ENCODE measurements at regions of chr7 and their contacts with region 1.

Region 1: DNA sequence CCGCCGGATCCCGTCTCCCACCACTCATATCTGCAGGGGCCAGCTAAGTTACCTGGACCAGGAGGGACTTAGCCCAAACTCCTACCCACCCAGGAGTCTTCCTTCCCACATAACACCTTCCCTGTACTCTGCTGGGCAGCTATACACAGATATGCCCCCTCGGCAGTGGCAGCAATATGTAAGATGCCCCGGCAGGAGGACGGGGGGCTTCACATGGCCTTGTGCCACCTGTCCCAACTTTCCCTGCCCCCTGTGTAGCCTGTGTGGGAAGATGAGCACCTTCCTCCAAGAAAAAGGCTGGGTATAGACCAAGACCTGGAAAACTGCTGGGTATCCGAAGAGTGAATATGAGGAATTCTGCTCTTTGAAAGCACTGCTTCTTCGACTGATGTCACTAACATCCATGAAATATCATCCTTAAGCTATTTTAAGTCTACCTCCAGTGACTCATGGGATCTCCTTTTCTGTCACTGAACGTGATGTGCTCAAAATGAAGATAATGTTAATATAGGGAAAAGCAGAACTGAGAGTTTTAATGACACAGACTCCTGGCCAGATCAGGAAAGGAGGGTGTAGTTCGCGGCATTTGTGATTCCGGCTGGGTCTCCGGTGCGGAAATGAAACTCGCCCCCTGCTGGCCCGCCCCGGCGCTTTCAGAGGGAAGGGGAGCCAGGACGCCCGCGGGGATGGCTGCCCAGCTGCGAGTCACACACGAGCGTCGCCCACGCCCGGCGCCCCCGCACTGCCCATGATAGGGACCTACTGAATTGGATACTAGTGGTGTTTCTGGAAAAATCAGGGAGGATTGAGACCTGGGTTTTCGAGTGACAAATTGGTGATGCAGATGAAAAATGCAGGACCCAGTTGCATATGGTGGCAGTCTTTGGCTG is 256.9 kb upstream of the NFE2L3 start:
- DNase-seq: peak; percentile 9 to 76 (median 53)
- ATAC-seq: peak; percentile 60 to 73 (median 61)
- H3K4me3 ChIP-seq: peak overlapping the region; percentile 4 to 39
- H3K4me3 Mint-ChIP-seq: peak overlapping the region; percentile 17 to 93 (median 46)
- H3K27ac ChIP-seq: no peak overlapping the region
- H3K27ac Mint-ChIP-seq: peak overlapping the region in 1 of 2 donors; percentile 23
- H3K4me1 ChIP-seq: peaks cover 0 to 22% of the 10 kb centered on the region in 2 experiments
- H3K4me1 Mint-ChIP-seq: peaks cover 23 to 27% (median 24%) of the 10 kb centered on the region in 3 donors
- H3K27me3 ChIP-seq: peaks cover 0 to 15% of the 10 kb centered on the region in 2 experiments
- H3K27me3 Mint-ChIP-seq: peaks cover 4% of the 10 kb centered on the region in 2 donors

Region 2: DNA sequence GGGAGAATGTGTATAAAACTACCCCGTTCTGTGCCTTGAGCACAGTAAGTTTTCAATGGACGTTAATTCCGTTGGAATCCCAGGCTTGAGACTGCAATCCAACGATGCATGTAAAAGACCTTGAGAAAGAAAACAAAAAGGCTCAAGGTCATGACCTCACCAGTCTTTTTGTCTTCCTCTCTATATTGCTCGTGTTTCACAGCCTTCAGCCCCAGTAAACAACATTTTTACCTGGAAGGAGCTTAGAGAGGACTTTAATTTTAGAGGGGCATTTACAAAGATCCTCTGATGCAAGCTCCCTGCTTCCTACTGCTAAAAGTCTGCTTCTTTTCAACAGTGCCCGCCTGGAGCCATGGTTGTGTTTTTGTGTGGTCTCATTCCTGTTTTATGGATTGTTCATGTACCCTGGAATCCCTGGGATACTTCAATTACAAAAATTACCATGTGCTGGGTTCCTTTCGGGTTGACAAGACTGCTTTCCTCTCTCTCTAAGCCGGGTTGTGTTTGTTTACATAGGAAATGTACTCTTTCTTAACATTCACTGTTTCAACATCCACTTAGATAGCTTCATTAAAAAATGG is 63.2 kb before region 1 on chr7:
- CTCF ChIA-PET with region 1: no interaction called
- POLR2A ChIA-PET with region 1: no interaction called
- DNase-seq: no peak
- ATAC-seq: no peak
- H3K4me3 ChIP-seq: no peak overlapping the region
- H3K4me3 Mint-ChIP-seq: no peak overlapping the region
- H3K27ac ChIP-seq: no peak overlapping the region
- H3K27ac Mint-ChIP-seq: no peak overlapping the region
- H3K4me1 ChIP-seq: no peaks in the 10 kb centered on the region
- H3K4me1 Mint-ChIP-seq: no peaks in the 10 kb centered on the region
- H3K27me3 ChIP-seq: no peaks in the 10 kb centered on the region
- H3K27me3 Mint-ChIP-seq: peaks cover 11 to 24% of the 10 kb centered on the region in 2 donors

Region 3: DNA sequence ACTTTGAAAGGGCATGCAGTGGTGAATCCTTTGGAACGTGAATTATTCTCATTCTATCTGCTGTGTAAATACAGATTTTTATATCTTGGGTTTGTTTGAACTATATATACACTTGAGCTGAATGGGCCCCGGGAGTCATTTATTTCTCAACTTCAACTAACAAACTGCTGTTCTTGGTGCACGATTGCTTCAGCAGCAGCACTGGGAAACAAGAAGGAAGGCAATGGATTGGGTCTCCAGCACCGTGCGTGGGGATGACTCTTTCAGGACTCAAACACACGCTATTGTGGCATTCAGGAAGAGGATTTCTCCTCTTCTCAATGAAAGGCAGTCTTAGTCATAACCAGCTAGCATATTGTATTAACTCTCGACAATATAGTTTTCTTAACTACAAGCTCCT is 30.9 kb after region 1 on chr7:
- CTCF ChIA-PET with region 1: no interaction called
- POLR2A ChIA-PET with region 1: no interaction called
- DNase-seq: no peak
- ATAC-seq: no peak
- H3K4me3 ChIP-seq: no peak overlapping the region
- H3K4me3 Mint-ChIP-seq: no peak overlapping the region
- H3K27ac ChIP-seq: no peak overlapping the region
- H3K27ac Mint-ChIP-seq: no peak overlapping the region
- H3K4me1 ChIP-seq: no peaks in the 10 kb centered on the region
- H3K4me1 Mint-ChIP-seq: peaks cover 0 to 5% (median 0%) of the 10 kb centered on the region in 3 donors
- H3K27me3 ChIP-seq: peaks cover 0 to 8% of the 10 kb centered on the region in 2 experiments
- H3K27me3 Mint-ChIP-seq: peaks cover 38 to 39% of the 10 kb centered on the region in 2 donors

Region 4: DNA sequence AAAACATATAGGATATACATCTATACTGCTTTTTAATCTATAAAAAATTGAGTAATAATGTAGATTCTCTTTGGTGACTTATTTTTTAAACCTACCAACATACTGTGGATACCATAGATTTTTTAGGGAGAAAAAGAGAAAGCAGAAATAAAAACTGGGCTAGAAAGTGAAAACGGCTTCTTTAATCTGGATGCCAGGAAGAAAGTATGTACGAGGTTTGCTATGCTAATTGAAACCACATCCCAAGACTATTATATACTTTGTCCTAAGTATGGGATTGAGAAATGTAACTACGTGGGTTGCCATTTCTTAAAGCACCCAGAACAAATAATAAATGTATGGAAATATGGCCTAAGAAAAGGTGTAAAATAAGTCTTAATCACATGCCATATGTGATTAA is 127.8 kb after region 1 on chr7:
- CTCF ChIA-PET with region 1: no interaction called
- POLR2A ChIA-PET with region 1: no interaction called
- DNase-seq: no peak
- ATAC-seq: no peak
- H3K4me3 ChIP-seq: no peak overlapping the region
- H3K4me3 Mint-ChIP-seq: no peak overlapping the region
- H3K27ac ChIP-seq: no peak overlapping the region
- H3K27ac Mint-ChIP-seq: no peak overlapping the region
- H3K4me1 ChIP-seq: no peaks in the 10 kb centered on the region
- H3K4me1 Mint-ChIP-seq: no peaks in the 10 kb centered on the region
- H3K27me3 ChIP-seq: peaks cover 0 to 3% of the 10 kb centered on the region in 2 experiments
- H3K27me3 Mint-ChIP-seq: peaks cover 13 to 16% of the 10 kb centered on the region in 2 donors

Region 5: DNA sequence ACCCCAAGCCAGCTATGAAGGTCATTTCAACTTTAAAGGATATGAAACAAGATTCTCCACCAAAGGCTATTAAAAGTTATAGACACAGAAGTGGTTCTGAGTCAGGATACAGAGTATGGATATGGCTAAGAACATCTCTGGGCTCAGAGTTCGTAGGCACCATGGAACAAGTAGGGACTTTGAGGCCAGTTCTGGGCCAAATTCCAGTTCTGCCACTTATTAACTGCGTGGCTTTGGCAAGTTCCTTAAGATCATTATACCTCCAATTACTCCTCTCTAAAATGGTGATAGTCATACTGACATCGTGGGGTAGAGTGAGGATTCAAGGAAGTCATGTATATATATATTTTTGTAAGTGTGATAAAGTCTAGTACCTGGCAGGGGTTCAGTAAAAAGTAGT is 151.0 kb after region 1 on chr7:
- CTCF ChIA-PET with region 1: no interaction called
- POLR2A ChIA-PET with region 1: no interaction called
- DNase-seq: no peak
- ATAC-seq: no peak
- H3K4me3 ChIP-seq: no peak overlapping the region
- H3K4me3 Mint-ChIP-seq: no peak overlapping the region
- H3K27ac ChIP-seq: no peak overlapping the region
- H3K27ac Mint-ChIP-seq: no peak overlapping the region
- H3K4me1 ChIP-seq: no peaks in the 10 kb centered on the region
- H3K4me1 Mint-ChIP-seq: no peaks in the 10 kb centered on the region
- H3K27me3 ChIP-seq: peaks cover 0 to 11% of the 10 kb centered on the region in 2 experiments
- H3K27me3 Mint-ChIP-seq: peaks cover 20 to 35% of the 10 kb centered on the region in 2 donors

Region 6: GRCh38 chr7:26078437-26079336 is 183.5 kb after region 1 on chr7:
- CTCF ChIA-PET with region 1: interaction called, 4 to 11 read pairs
- POLR2A ChIA-PET with region 1: no interaction called
- DNase-seq: peak; percentile 69 to 89 (median 82)
- ATAC-seq: peak; percentile 99 to 100 (median 100)
- H3K4me3 ChIP-seq: no peak overlapping the region
- H3K4me3 Mint-ChIP-seq: peak overlapping the region; percentile 9 to 38 (median 31)
- H3K27ac ChIP-seq: no peak overlapping the region
- H3K27ac Mint-ChIP-seq: no peak overlapping the region
- H3K4me1 ChIP-seq: peaks cover 0 to 5% of the 10 kb centered on the region in 2 experiments
- H3K4me1 Mint-ChIP-seq: peaks cover 7 to 11% (median 9%) of the 10 kb centered on the region in 3 donors
- H3K27me3 ChIP-seq: peaks cover 0 to 25% of the 10 kb centered on the region in 2 experiments
- H3K27me3 Mint-ChIP-seq: peaks cover 18 to 31% of the 10 kb centered on the region in 2 donors

Region 7: DNA sequence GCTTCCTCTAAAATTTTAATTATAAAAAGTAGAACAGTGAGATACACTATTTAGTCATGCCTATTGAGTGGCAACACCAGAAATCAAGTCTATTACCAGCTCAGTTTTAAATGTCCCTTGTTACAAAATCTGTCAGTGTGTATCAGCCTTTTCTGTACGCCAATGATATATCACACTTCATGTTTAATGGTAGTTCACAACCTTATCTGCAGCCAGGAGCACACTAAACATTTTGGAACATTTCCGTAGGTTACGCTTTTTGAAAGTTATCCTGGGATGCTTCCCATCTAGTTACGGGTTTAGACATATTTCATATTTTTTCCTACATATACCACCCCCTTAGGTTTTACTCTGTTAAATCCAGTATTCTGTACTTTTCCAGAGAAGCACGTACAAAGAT is 300.0 kb after region 1 on chr7:
- CTCF ChIA-PET with region 1: interaction called, 4 to 23 read pairs
- POLR2A ChIA-PET with region 1: interaction called in 1 of 2 experiments, 13 read pairs
- DNase-seq: peak in 1 of 35 experiments; percentile 35
- ATAC-seq: no peak
- H3K4me3 ChIP-seq: no peak overlapping the region
- H3K4me3 Mint-ChIP-seq: peak overlapping the region; percentile 71 to 96 (median 72)
- H3K27ac ChIP-seq: peak overlapping the region; percentile 47
- H3K27ac Mint-ChIP-seq: peak overlapping the region; percentile 50 to 68
- H3K4me1 ChIP-seq: peaks cover 37 to 65% of the 10 kb centered on the region in 2 experiments
- H3K4me1 Mint-ChIP-seq: peaks cover 69 to 90% (median 74%) of the 10 kb centered on the region in 3 donors
- H3K27me3 ChIP-seq: no peaks in the 10 kb centered on the region
- H3K27me3 Mint-ChIP-seq: peaks cover 0 to 2% of the 10 kb centered on the region in 2 donors

Region 8: DNA sequence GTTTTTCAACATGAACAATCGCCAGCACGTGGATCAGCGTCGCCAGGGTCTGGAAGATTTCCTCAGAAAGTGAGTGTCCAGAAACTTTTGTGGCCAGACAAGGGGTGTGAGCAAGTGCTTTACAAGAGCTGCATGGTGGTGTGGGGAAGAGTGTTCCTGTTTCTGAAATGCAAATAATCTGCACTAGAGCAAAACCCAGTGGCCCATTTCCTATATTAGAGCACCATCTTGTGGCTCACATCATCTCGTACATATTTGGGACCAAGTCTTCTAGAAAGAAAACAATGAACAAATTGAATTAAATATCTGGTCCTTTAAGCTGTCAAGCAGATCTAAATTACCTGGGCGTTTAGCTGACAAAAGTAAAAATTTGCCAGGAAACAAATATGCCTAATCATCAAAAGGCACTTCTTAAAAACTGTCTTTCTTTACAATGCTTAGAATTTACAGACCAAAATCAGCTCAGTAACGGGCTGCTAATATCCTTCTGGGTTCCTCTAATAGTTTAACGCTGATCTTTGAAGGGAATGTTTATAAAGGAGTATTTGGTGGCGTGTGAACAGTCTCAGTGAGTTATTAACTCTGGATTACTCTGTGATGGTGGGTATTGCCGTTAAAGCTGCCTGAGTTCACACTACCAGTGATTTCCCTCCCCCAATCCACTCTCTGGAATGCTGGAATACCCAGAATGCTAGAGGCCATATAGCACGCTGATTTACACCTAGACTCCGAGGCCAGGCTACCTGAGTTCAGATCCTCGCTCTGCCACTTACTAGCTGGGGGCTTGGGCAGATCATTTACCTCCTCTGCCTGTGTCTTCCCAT is 470.1 kb after region 1 on chr7:
- CTCF ChIA-PET with region 1: interaction called, 42 to 86 read pairs
- POLR2A ChIA-PET with region 1: interaction called in 1 of 2 experiments, 5 read pairs
- DNase-seq: peak in 34 of 35 experiments; percentile 11 to 83 (median 45)
- ATAC-seq: peak; percentile 69 to 81 (median 74)
- H3K4me3 ChIP-seq: no peak overlapping the region
- H3K4me3 Mint-ChIP-seq: no peak overlapping the region
- H3K27ac ChIP-seq: no peak overlapping the region
- H3K27ac Mint-ChIP-seq: peak overlapping the region in 1 of 2 donors; percentile 7
- H3K4me1 ChIP-seq: peaks cover 0 to 8% of the 10 kb centered on the region in 2 experiments
- H3K4me1 Mint-ChIP-seq: peaks cover 6 to 11% (median 10%) of the 10 kb centered on the region in 3 donors
- H3K27me3 ChIP-seq: no peaks in the 10 kb centered on the region
- H3K27me3 Mint-ChIP-seq: peaks cover 0 to 3% of the 10 kb centered on the region in 2 donors

Region 9: GRCh38 chr7:26686448-26686981 is 791.4 kb after region 1 on chr7:
- CTCF ChIA-PET with region 1: interaction called, 3 to 15 read pairs
- POLR2A ChIA-PET with region 1: no interaction called
- DNase-seq: peak in 2 of 35 experiments; percentile 4 to 63
- ATAC-seq: peak in 2 of 4 experiments; percentile 40 to 48
- H3K4me3 ChIP-seq: no peak overlapping the region
- H3K4me3 Mint-ChIP-seq: no peak overlapping the region
- H3K27ac ChIP-seq: no peak overlapping the region
- H3K27ac Mint-ChIP-seq: no peak overlapping the region
- H3K4me1 ChIP-seq: no peaks in the 10 kb centered on the region
- H3K4me1 Mint-ChIP-seq: peaks cover 0 to 3% (median 0%) of the 10 kb centered on the region in 3 donors
- H3K27me3 ChIP-seq: no peaks in the 10 kb centered on the region
- H3K27me3 Mint-ChIP-seq: peaks cover 11 to 28% of the 10 kb centered on the region in 2 donors

Measured in T-cell (primary cell).